Activated T-helper 2 cell treated with anti-CD3 and anti-CD28 coated beads, Interferon-gamma antibody, Interleukin-2, Interleukin-4, amounts not matched to agents 10 μg/mL and 5 μg/mL and 100 μg/mL, durations not matched to agents 14 hours and 24 hours and 36 hours (primary cell): ENCODE measurements at regions of chr4 and their contacts with region 1.

Region 1: DNA sequence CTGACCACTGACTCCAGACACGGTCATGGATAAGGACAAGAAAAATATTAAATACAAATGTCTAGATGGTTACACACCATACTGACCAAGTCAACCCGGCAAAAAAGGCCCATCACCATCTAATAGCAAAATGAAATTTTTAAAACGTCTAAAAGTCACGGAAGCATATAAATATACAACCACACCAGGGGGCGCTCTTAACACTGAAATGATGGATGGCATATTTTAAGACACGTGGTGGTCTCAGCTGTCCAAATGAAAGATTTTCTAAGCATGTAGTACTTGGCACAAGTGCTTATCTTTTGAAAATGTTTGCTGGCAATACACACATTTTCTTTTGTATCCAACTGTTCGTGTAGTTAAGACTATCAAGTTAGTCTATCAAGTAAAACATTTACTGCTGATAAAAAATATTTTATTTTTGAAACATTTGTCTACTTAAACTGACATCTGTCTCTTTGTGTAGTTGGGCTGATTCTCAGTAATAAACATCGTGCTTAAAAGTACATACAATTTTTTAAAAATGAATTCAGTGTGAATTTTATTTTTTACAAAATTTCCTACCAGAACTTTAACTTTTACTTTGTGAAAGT is 64.6 kb downstream of the COX7B2 start:
- DNase-seq: no peak
- H3K4me3 Mint-ChIP-seq: no peak overlapping the region
- H3K27ac Mint-ChIP-seq: no peak overlapping the region
- H3K4me1 Mint-ChIP-seq: no peaks in the 10 kb centered on the region
- H3K27me3 Mint-ChIP-seq: no peaks in the 10 kb centered on the region

Region 2: DNA sequence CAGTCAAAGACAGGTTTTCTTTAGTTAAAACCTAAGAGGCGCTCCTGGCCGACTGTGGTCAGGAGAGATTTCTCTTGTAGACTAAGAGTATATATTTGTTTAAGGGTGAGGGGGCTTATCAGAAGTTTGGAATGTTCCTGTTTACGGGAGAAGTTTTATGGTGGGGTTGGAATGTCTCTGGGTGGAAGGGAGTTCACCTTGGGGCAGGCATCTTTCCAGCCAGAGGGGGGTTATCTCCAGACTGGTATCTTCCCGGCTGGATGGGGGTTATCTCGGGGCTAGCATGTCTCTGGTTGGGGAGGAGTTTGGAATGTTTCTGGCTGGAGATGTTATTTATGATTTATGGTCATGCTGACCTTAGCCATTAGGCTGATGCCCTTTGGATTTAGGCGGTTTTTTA is 51.4 kb before region 1 on chr4:
- intact Hi-C with region 1: no loop called
- DNase-seq: no peak
- H3K4me3 Mint-ChIP-seq: no peak overlapping the region
- H3K27ac Mint-ChIP-seq: no peak overlapping the region
- H3K4me1 Mint-ChIP-seq: no peaks in the 10 kb centered on the region
- H3K27me3 Mint-ChIP-seq: no peaks in the 10 kb centered on the region

Region 3: DNA sequence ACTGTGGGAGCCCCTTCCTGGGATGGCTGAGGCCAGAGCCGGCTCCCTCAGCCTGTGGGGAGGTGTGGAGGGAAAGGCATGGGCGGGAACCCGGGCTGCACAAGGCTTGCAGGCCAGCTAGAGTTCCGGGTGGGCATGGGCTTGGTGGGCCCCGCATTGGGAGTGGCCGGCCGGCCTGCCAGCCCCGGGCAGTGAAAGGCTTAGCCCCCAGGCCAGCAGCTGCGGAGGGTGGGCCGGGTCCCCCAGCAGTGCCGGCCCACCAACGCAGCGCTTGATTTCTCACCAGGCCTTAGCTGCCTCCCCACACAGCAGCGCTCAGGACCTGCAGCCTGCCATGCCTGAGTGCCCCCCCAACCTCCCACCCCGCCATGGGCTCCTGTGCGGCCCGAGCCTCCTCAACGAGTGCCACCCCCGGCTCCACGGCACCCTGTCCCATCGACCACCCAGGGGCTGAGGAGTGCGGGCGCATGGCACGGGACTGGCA is 13.4 kb before region 1 on chr4:
- intact Hi-C with region 1: no loop called
- DNase-seq: no peak
- H3K4me3 Mint-ChIP-seq: no peak overlapping the region
- H3K27ac Mint-ChIP-seq: no peak overlapping the region
- H3K4me1 Mint-ChIP-seq: no peaks in the 10 kb centered on the region
- H3K27me3 Mint-ChIP-seq: no peaks in the 10 kb centered on the region

Region 4: GRCh38 chr4:46975812-46976553 is 131.6 kb after region 1 on chr4:
- intact Hi-C with region 1: no loop called
- DNase-seq: no peak
- H3K4me3 Mint-ChIP-seq: no peak overlapping the region
- H3K27ac Mint-ChIP-seq: no peak overlapping the region
- H3K4me1 Mint-ChIP-seq: no peaks in the 10 kb centered on the region
- H3K27me3 Mint-ChIP-seq: peaks cover 2% of the 10 kb centered on the region

Region 5: GRCh38 chr4:47032415-47033106 is 188.1 kb after region 1 on chr4:
- intact Hi-C with region 1: loop called (anchors 2 kb)
- DNase-seq: peak; percentile 25
- H3K4me3 Mint-ChIP-seq: peak overlapping the region; percentile 63
- H3K27ac Mint-ChIP-seq: no peak overlapping the region
- H3K4me1 Mint-ChIP-seq: peaks cover 18% of the 10 kb centered on the region
- H3K27me3 Mint-ChIP-seq: peaks cover 30% of the 10 kb centered on the region

Region 6: DNA sequence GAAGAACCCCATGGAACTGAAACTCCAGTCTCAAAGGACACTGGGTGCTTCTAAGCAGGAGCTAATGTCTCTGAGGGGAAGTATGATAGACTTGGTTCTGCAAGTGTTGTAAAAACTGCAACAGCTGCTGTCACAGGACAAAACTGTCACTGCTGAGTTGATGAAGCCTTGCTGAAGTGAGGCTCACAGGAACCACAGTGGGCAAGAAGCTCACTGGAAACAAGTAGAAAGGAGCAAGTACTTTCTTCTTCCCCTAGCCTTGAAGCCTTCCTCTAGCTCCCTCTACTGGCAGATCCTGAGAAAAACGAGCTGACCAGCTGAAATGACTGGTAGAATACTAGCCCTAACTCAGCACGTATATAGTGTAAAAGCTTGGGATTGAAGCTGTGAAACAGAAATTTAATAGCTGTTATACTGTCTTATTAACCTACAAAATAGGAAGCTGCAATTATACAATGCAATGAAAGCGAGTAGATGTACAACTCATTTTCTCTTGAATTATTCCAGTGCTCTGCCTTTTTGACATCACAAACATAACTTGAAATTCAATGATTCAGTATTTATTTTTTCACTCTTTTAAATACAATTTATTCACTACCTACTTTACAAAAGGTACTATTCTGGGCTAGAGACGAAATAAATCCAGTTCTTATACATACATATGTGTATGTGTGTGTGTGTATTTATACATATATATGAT is 278.3 kb after region 1 on chr4:
- intact Hi-C with region 1: loop called (anchors 1 kb)
- DNase-seq: peak; percentile 29
- H3K4me3 Mint-ChIP-seq: no peak overlapping the region
- H3K27ac Mint-ChIP-seq: no peak overlapping the region
- H3K4me1 Mint-ChIP-seq: peaks cover 3% of the 10 kb centered on the region
- H3K27me3 Mint-ChIP-seq: no peaks in the 10 kb centered on the region

Region 7: GRCh38 chr4:47383829-47384427 is 539.5 kb after region 1 on chr4:
- intact Hi-C with region 1: loop called (anchors 2 kb)
- DNase-seq: no peak
- H3K4me3 Mint-ChIP-seq: no peak overlapping the region
- H3K27ac Mint-ChIP-seq: no peak overlapping the region
- H3K4me1 Mint-ChIP-seq: no peaks in the 10 kb centered on the region
- H3K27me3 Mint-ChIP-seq: no peaks in the 10 kb centered on the region